ENCODE measurements at regions of chr3 and their contacts with region 1.

Region 1: DNA sequence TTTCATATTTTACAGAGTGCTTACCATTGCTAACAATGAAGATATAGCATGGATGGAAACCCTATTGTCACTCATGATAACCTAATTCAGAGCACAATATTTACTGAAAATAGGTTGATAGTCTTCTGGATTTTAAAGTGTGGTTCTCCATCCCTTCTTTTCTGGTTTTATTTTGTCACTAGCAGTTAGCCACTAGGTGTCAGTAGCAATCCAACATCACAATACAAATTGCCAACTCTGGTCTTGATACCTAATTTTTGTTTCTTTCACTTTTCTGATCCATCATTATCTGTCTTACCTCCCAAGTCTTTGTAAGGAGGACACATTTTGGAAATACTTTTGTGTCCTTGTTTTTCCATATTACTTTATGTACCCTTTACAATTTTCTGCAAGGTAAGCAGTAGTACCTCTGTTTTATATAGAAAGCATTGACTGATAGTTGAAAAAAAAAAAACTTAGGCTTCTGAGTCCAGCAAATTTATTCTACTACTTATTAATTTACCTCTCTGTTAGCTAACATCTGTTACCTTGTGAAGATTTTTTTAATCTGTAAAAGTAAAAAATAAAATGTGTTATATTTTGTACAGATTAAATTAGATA is 28.3 kb upstream of the CRYBG3 start:
- DNase-seq: no peak
- ATAC-seq: peak; percentile 76 to 87 (median 81)
- H3K4me3 ChIP-seq: no peak overlapping the region
- H3K27ac ChIP-seq: no peak overlapping the region
- H3K4me1 ChIP-seq: no peaks in the 10 kb centered on the region
- H3K27me3 ChIP-seq: no peaks in the 10 kb centered on the region
- CTCF ChIP-seq: peak; percentile 82 to 86 (median 82)
- POLR2A ChIP-seq: no peak

Region 2: GRCh38 chr3:97636465-97636864 is 157.1 kb before region 1 on chr3:
- intact Hi-C with region 1: no loop called
- DNase-seq: no peak
- ATAC-seq: no peak
- H3K4me3 ChIP-seq: no peak overlapping the region
- H3K27ac ChIP-seq: no peak overlapping the region
- H3K4me1 ChIP-seq: no peaks in the 10 kb centered on the region
- H3K27me3 ChIP-seq: no peaks in the 10 kb centered on the region
- CTCF ChIP-seq: no peak
- POLR2A ChIP-seq: no peak

Region 3: GRCh38 chr3:97952280-97952679 is 158.8 kb after region 1 on chr3:
- intact Hi-C with region 1: no loop called
- DNase-seq: no peak
- ATAC-seq: peak in 3 of 4 donors; percentile 32 to 79 (median 55)
- H3K4me3 ChIP-seq: no peak overlapping the region
- H3K27ac ChIP-seq: no peak overlapping the region
- H3K4me1 ChIP-seq: no peaks in the 10 kb centered on the region
- H3K27me3 ChIP-seq: no peaks in the 10 kb centered on the region
- CTCF ChIP-seq: no peak
- POLR2A ChIP-seq: no peak

Region 4: DNA sequence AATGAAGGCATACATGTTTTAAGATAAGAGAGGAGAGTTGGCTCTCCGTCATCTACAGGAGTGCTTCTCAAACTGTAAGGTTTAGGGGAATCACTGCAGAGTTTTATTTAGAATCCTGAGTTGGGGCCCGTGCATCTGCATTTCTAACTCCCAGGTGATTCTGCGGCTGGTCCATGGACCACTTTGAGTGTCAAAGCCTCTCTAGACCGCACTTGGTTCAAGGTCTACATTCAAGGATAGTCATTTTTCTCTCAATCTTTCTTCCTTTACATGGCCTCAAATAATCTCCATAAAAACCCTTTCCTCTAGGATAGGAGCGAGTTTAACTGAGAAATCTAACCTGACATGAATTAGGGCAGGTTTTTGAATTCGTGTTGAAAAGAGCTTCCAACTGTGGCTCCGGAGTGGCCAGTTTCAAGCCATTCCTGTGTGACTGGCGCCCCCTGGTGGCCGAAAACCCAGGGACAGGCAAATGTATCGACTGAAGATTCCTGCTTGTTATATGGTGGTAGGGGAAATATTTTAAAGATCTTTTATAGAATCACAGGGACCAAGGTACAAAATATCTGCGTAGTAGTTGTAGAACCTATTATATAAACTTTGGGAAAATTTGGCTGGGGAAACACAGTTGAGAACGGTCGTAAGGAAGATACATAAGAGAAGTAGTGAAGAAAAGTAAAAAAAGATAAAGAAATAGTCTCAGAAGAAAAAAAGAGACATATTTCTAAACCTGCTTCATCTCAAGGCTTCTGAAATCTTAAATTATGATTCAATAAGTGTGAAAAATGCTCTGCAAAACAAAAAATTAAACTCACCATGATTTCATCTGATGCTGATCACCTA is 229.7 kb after region 1 on chr3:
- intact Hi-C with region 1: loop called (anchors 5 kb)
- DNase-seq: peak; percentile 88 to 89 (median 88)
- ATAC-seq: peak; percentile 86 to 97 (median 94)
- H3K4me3 ChIP-seq: no peak overlapping the region
- H3K27ac ChIP-seq: no peak overlapping the region
- H3K4me1 ChIP-seq: no peaks in the 10 kb centered on the region
- H3K27me3 ChIP-seq: no peaks in the 10 kb centered on the region
- CTCF ChIP-seq: peak; percentile 91 to 98 (median 97)
- POLR2A ChIP-seq: no peak